CD14-positive monocyte (primary cell): ENCODE measurements at regions of chr1 and their contacts with region 1.

Region 1: DNA sequence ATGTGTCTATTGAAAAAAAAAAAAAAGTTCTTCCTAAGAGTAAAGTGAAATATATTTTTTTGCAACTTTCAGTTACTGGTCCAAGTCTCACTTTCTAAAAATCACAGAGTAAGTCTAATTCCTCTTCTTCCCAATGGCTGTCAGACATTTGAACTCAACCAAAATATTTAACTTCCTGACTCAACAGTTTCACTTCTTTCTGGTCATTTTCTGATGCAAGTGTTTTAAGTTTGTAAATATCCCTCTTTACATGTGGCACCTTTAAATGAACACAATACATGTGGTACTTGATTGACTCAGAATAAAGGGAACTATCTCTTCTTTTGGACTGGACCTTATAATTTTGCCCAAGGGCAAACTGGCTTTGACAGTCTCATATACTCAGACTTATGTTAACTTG is 76.7 kb downstream of the ASH1L start:
- DNase-seq: peak; percentile 46 to 75 (median 68)
- H3K4me3 ChIP-seq: peak overlapping the region in 1 of 3 experiments; percentile 9
- H3K4me3 Mint-ChIP-seq: peak overlapping the region in 1 of 2 donors; percentile 61
- H3K27ac ChIP-seq: peak overlapping the region in 1 of 2 donors; percentile 47
- H3K27ac Mint-ChIP-seq: peak overlapping the region; percentile 55 to 84 (median 74)
- H3K4me1 ChIP-seq: peaks cover 22 to 24% of the 10 kb centered on the region in 2 donors
- H3K4me1 Mint-ChIP-seq: peaks cover 22% of the 10 kb centered on the region
- H3K27me3 ChIP-seq: no peaks in the 10 kb centered on the region
- H3K27me3 Mint-ChIP-seq: no peaks in the 10 kb centered on the region
- CTCF ChIP-seq: no peak

Region 2: DNA sequence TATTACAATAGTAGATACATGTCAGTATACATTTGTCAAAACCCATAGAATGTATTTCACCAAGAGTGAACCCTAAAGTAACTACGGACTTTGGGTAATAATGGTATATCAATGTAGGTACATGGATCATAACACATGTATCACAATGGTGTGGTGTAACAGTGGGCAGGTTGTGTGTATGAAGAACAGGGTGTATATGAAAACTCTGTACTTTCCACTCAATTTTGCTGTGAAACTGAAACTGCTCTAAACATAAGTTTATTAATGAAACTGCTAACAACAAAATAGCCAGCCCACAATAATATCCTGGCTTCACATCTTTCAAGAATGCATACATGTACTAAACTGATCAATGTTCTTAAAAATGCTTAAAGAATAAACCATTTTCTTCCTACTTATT is 75.0 kb before region 1 on chr1:
- intact Hi-C with region 1: no loop called
- DNase-seq: no peak
- H3K4me3 ChIP-seq: no peak overlapping the region
- H3K4me3 Mint-ChIP-seq: no peak overlapping the region
- H3K27ac ChIP-seq: peak overlapping the region in 1 of 2 donors; percentile 24
- H3K27ac Mint-ChIP-seq: no peak overlapping the region
- H3K4me1 ChIP-seq: no peaks in the 10 kb centered on the region
- H3K4me1 Mint-ChIP-seq: no peaks in the 10 kb centered on the region
- H3K27me3 ChIP-seq: no peaks in the 10 kb centered on the region
- H3K27me3 Mint-ChIP-seq: no peaks in the 10 kb centered on the region
- CTCF ChIP-seq: no peak

Region 3: GRCh38 chr1:155569988-155570592 is 84.1 kb after region 1 on chr1:
- intact Hi-C with region 1: loop called in 1 of 2 experiments (anchors 10 kb)
- DNase-seq: peak; percentile 27 to 70 (median 41)
- H3K4me3 ChIP-seq: no peak overlapping the region
- H3K4me3 Mint-ChIP-seq: no peak overlapping the region
- H3K27ac ChIP-seq: peak overlapping the region in 1 of 2 donors; percentile 58
- H3K27ac Mint-ChIP-seq: peak overlapping the region in 3 of 7 donors; percentile 3 to 79 (median 13)
- H3K4me1 ChIP-seq: peaks cover 0 to 11% of the 10 kb centered on the region in 2 donors
- H3K4me1 Mint-ChIP-seq: peaks cover 14% of the 10 kb centered on the region
- H3K27me3 ChIP-seq: no peaks in the 10 kb centered on the region
- H3K27me3 Mint-ChIP-seq: no peaks in the 10 kb centered on the region
- CTCF ChIP-seq: no peak